ENCODE measurements at regions of chr1 and their contacts with region 1.

Region 1: DNA sequence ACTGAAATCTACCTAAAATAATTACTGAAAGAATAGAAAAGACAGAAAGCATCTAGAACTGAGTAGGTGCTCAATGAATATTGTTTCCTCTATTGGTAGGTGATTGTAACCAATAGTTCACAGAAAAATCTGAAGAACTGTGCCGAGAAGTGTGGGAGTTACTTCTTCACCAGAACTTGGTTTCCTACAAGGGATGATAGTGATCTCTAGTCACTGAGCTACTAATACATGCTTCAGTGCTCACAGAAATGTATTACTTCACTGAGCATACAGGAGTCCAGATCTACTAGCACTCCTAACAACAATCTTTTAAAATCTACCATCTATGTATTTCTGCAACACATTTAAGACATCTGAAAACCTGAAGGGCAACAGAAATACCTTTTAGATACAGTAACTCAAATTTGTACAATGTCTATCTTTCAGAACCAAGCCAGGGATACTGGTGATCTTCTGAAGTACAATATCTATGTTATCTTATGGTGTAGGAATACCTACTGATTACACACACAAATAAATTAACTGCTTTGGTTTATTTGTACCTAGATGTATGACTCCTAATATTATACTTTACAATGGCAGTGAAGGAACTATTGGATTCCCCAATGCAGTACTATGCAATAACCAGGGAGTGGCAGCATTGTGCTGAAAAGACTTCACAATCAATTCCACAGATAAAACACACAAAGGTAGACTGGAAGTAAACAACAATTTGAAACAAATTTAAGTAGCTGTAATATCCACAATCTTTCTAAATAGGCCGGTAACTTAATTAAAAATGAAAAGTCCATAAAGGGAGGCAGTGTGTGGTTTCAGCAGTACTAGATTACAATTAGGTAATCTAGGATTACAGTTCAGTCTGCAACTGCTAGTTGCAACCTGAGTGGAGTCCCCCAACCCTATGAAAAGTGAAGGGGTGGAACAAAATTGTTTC is 243.0 kb downstream of the SLC45A1 start:
- DNase-seq: no peak
- H3K4me3 ChIP-seq: no peak overlapping the region
- H3K27ac ChIP-seq: no peak overlapping the region
- H3K4me1 ChIP-seq: peaks cover 9% of the 10 kb centered on the region
- H3K27me3 ChIP-seq: no peaks in the 10 kb centered on the region
- CTCF ChIP-seq: peak; percentile 56 to 92 (median 77)
- POLR2A ChIP-seq: no peak

Region 2: GRCh38 chr1:8671306-8671917 is 110.5 kb after region 1 on chr1:
- intact Hi-C with region 1: loop called (anchors 10 kb)
- DNase-seq: no peak
- H3K4me3 ChIP-seq: no peak overlapping the region
- H3K27ac ChIP-seq: no peak overlapping the region
- H3K4me1 ChIP-seq: peaks cover 23% of the 10 kb centered on the region
- H3K27me3 ChIP-seq: no peaks in the 10 kb centered on the region
- CTCF ChIP-seq: peak; percentile 64 to 87 (median 77)
- POLR2A ChIP-seq: no peak

Region 3: GRCh38 chr1:8848663-8849386 is 287.9 kb after region 1 on chr1:
- intact Hi-C with region 1: loop called (anchors 10 kb)
- DNase-seq: no peak
- H3K4me3 ChIP-seq: no peak overlapping the region
- H3K27ac ChIP-seq: no peak overlapping the region
- H3K4me1 ChIP-seq: peaks cover 18% of the 10 kb centered on the region
- H3K27me3 ChIP-seq: no peaks in the 10 kb centered on the region
- CTCF ChIP-seq: peak; percentile 85 to 92 (median 85)
- POLR2A ChIP-seq: no peak

Measured in vagina (tissue), 2 donors.